CD4-positive, alpha-beta T cell (primary cell): ENCODE measurements at regions of chr4 and their contacts with region 1.

Region 1: DNA sequence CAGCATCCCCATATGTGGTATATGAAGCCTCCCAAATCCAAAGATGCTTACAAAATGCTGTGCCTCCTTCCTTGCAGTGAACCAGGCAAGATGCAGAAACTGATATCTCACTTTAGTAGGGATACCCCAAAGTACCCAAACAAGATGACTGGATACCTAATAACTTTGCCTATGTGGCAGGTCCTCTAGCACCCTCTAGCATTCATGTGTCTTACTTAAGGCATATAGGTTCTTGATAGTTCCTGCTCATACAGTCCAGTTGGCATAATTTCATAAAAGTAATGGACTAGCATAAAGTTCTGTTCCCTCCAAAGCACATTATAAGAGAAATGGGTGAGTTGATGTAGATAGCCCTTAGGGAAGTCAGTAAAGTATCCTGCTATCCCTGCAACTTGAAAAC is 36.8 kb upstream of the SPP1 start:
- DNase-seq: no peak
- ATAC-seq: no peak
- H3K4me3 ChIP-seq: no peak overlapping the region
- H3K4me3 Mint-ChIP-seq: no peak overlapping the region
- H3K27ac ChIP-seq: no peak overlapping the region
- H3K27ac Mint-ChIP-seq: no peak overlapping the region
- H3K4me1 ChIP-seq: no peaks in the 10 kb centered on the region
- H3K4me1 Mint-ChIP-seq: no peaks in the 10 kb centered on the region
- H3K27me3 ChIP-seq: no peaks in the 10 kb centered on the region
- H3K27me3 Mint-ChIP-seq: no peaks in the 10 kb centered on the region
- CTCF ChIP-seq: no peak

Region 2: GRCh38 chr4:87716371-87717265 is 222.1 kb before region 1 on chr4:
- CTCF ChIA-PET with region 1: no interaction called
- POLR2A ChIA-PET with region 1: no interaction called
- intact Hi-C with region 1: no loop called
- DNase-seq: no peak
- ATAC-seq: no peak
- H3K4me3 ChIP-seq: no peak overlapping the region
- H3K4me3 Mint-ChIP-seq: no peak overlapping the region
- H3K27ac ChIP-seq: no peak overlapping the region
- H3K27ac Mint-ChIP-seq: no peak overlapping the region
- H3K4me1 ChIP-seq: no peaks in the 10 kb centered on the region
- H3K4me1 Mint-ChIP-seq: no peaks in the 10 kb centered on the region
- H3K27me3 ChIP-seq: no peaks in the 10 kb centered on the region
- H3K27me3 Mint-ChIP-seq: no peaks in the 10 kb centered on the region
- CTCF ChIP-seq: no peak

Region 3: GRCh38 chr4:87926554-87927098 is 12.1 kb before region 1 on chr4:
- CTCF ChIA-PET with region 1: no interaction called
- POLR2A ChIA-PET with region 1: no interaction called
- intact Hi-C with region 1: loop called (anchors 1 kb)
- DNase-seq: no peak
- ATAC-seq: no peak
- H3K4me3 ChIP-seq: no peak overlapping the region
- H3K4me3 Mint-ChIP-seq: no peak overlapping the region
- H3K27ac ChIP-seq: no peak overlapping the region
- H3K27ac Mint-ChIP-seq: no peak overlapping the region
- H3K4me1 ChIP-seq: no peaks in the 10 kb centered on the region
- H3K4me1 Mint-ChIP-seq: no peaks in the 10 kb centered on the region
- H3K27me3 ChIP-seq: no peaks in the 10 kb centered on the region
- H3K27me3 Mint-ChIP-seq: peaks cover 11% of the 10 kb centered on the region
- CTCF ChIP-seq: no peak